ENCODE measurements at regions of chr10 and their contacts with region 1.

Region 1: GRCh38 chr10:27328946-27329345 is 88.3 kb upstream of the ACBD5 start:
- DNase-seq: no peak
- H3K4me3 ChIP-seq: no peak overlapping the region
- H3K4me3 Mint-ChIP-seq: no peak overlapping the region
- H3K27ac Mint-ChIP-seq: no peak overlapping the region
- H3K4me1 ChIP-seq: no peaks in the 10 kb centered on the region
- H3K4me1 Mint-ChIP-seq: no peaks in the 10 kb centered on the region
- H3K27me3 ChIP-seq: no peaks in the 10 kb centered on the region
- H3K27me3 Mint-ChIP-seq: peaks cover 14% of the 10 kb centered on the region
- CTCF ChIP-seq: no peak

Region 2: DNA sequence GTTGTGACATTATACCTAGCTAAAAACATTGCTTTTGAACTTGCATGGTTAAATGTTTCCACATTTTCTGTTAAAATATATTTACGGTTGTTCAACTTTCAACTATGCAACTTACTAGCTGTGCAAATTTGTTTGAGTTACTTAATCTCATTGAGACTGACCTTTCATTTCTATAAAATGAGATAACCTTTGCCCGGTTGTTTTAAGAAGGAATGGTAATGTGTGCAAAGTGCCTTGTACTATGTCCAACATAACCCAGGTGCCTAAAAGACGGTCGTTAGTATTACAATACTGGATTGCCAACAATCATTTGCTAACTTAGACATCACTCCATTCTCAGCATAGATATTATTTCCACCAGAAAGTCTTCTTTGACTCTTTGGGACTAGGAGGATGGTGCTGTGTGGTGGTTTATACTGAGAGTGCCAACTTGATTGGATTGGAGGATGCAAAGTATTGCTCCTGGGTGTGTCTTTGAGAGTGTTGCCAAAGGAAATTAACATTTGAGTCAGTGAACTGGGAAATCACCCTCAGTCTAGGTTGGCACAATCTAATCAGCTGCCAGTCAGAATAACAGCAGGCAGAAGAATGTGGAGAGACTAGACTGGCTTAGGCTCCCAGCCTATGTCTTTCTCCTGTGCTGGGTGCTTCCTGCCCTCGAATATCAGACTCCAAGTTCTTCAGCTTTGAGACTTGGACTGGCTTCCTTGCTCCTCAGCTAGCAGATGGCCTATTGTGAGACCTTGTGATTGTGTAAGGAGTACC is 716.6 kb before region 1 on chr10:
- CTCF ChIA-PET with region 1: no interaction called
- POLR2A ChIA-PET with region 1: no interaction called
- intact Hi-C with region 1: no loop called
- DNase-seq: no peak
- H3K4me3 ChIP-seq: no peak overlapping the region
- H3K4me3 Mint-ChIP-seq: no peak overlapping the region
- H3K27ac Mint-ChIP-seq: no peak overlapping the region
- H3K4me1 ChIP-seq: no peaks in the 10 kb centered on the region; the same call in 1 of the 2 replicates
- H3K4me1 Mint-ChIP-seq: no peaks in the 10 kb centered on the region
- H3K27me3 ChIP-seq: no peaks in the 10 kb centered on the region
- H3K27me3 Mint-ChIP-seq: peaks cover 12% of the 10 kb centered on the region
- CTCF ChIP-seq: no peak

Region 3: GRCh38 chr10:27312854-27313253 is 16.1 kb before region 1 on chr10:
- CTCF ChIA-PET with region 1: no interaction called
- POLR2A ChIA-PET with region 1: no interaction called
- intact Hi-C with region 1: loop called (anchors 1 kb)
- DNase-seq: no peak
- H3K4me3 ChIP-seq: no peak overlapping the region
- H3K4me3 Mint-ChIP-seq: no peak overlapping the region
- H3K27ac Mint-ChIP-seq: no peak overlapping the region
- H3K4me1 ChIP-seq: no peaks in the 10 kb centered on the region
- H3K4me1 Mint-ChIP-seq: no peaks in the 10 kb centered on the region
- H3K27me3 ChIP-seq: no peaks in the 10 kb centered on the region
- H3K27me3 Mint-ChIP-seq: peaks cover 5% of the 10 kb centered on the region
- CTCF ChIP-seq: no peak

Region 4: DNA sequence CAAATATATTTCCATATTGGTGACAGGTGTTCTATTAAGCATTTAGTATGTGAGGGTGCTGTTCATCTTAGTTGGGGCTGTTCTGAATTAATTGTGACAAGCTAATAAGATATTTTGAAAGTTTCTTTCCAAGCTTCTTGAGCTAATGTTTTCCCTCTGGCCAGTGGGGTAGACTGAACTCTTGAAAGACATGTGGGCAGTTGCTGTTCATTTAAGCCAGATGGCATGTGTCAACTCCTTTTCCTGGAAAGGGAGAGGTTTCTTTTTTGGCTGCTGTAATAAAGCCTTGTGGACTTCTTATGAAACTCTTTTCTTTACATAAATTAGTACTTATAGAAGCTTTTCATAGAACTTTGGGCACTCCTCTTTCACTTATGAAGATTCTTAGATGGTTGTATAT is 196.9 kb after region 1 on chr10:
- CTCF ChIA-PET with region 1: no interaction called
- POLR2A ChIA-PET with region 1: interaction called, 11 read pairs
- intact Hi-C with region 1: no loop called
- DNase-seq: no peak
- H3K4me3 ChIP-seq: no peak overlapping the region
- H3K4me3 Mint-ChIP-seq: no peak overlapping the region
- H3K27ac Mint-ChIP-seq: no peak overlapping the region
- H3K4me1 ChIP-seq: peaks cover 11% of the 10 kb centered on the region
- H3K4me1 Mint-ChIP-seq: peaks cover 25% of the 10 kb centered on the region
- H3K27me3 ChIP-seq: no peaks in the 10 kb centered on the region
- H3K27me3 Mint-ChIP-seq: no peaks in the 10 kb centered on the region
- CTCF ChIP-seq: no peak

Measured in Caco-2 (cell line).